Dorsolateral prefrontal cortex (tissue), 120 donors: ENCODE measurements at regions of chr14 and their contacts with region 1.

Region 1: DNA sequence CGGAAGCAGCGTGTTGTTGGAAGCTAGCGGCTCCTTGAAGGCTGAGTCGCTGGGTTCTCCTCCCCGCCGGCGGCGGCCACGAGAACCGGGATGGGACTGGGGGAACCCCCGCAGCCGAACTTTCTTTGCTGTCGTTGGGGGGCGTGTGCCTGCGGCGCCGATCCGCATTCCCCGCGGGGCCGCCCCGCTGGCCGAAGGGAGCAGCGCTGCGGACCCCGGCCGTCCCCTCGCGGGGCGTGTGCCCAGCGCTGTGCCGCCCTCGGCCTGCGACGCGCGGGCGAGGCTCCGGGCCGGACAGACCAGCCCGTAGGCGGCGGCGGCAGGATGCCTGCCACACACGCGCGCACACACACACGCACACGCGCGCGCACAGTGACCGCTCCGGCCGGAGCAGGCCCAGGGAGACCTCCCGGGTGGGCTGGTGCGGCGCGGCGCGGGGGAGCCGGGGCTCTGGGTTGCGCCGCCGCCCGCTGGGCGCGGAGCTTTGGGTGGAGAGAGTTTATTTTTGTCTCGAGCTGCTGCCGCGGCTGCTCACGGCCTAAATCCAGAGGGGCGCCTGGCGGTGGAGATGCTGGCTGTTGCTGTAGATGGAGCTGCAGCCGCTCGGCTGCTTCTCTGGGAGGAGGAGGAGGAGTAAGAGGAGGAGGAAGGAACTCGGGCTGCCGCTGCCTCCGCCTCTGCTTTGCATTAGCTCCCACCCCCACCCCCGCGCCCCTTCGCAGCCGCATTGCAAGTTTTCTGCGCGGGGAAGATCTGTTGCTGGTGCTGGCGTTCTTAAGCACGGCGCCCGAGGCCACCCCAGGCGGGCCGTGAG is at the start of gene SAMD4A:
- DNase-seq: peak; percentile 56 to 81 (median 77)
- H3K4me3 ChIP-seq: peak within 1 kb of the TSS; percentile 54 to 98 (median 82)
- H3K27ac ChIP-seq: peak within 1 kb of the TSS; percentile 65 to 99 (median 94)
- H3K27me3 ChIP-seq: no peaks in the 10 kb centered on the region
- CTCF ChIP-seq: peak in 44 of 56 donors; percentile 9 to 53 (median 35)
- total RNA-seq, gene SAMD4A: 28.4 to 174 (median 49.6) TPM

Region 2: GRCh38 chr14:54488646-54489317 is 77.8 kb before region 1 on chr14 and contains the start of gene GMFB:
- intact Hi-C with region 1: no loop called
- DNase-seq: peak; percentile 82 to 90 (median 86)
- H3K4me3 ChIP-seq: peak within 1 kb of the TSS; percentile 62 to 100 (median 95)
- H3K27ac ChIP-seq: peak within 1 kb of the TSS; percentile 24 to 98 (median 93)
- H3K27me3 ChIP-seq: no peaks in the 10 kb centered on the region
- CTCF ChIP-seq: peak in 55 of 56 donors; percentile 35 to 85 (median 66)
- total RNA-seq, gene GMFB: 78.7 to 157 (median 110) TPM

Region 3: DNA sequence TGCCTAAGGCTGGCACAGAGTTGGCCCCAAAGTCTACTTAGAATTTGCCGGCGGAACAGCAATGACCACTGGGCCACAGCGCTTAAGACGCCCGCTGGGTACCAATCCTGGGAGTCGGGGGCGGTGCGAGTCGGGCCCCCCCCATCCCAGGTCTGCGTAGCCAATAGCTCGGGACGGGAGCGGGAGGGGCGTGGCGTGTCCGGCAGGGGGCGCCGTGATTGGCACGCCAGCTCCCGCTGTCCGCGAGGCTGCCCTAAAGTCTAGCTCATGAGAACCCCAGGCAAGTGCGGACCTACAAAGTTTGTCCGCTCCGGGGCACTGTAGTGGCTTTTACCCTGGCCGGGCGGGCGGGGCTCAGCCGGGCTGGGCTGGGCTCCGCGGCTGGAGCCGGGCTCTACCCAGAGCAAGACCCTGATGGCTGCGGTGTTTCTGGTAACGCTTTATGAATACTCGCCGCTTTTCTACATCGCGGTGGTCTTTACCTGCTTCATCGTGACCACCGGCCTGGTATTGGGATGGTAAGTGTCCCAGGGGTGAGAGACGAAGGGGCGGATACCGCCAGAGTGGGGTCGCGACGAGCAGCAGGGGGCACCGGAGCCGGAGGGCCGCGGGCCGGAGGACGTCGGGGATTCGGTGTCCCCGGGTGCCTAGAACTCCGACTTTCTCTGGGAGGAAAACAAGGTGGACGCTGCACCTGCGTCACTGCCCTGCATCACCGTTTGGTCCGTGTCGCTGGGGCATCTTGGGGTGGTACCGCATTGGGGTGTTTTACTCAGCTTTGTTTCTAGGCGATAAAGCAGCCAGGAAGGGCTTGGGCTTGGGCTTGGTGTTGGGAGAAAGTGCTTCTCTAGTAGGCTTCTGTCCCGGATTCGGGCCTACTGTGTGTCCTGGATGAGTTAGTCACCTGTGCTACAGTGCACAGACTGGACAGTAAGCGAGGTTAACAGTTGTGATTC is 56.8 kb before region 1 on chr14 and contains the start of gene CGRRF1:
- intact Hi-C with region 1: loop called (anchors 1 to 10 kb)
- DNase-seq: peak; percentile 98 to 99 (median 99)
- H3K4me3 ChIP-seq: peak within 1 kb of the TSS; percentile 58 to 100 (median 97)
- H3K27ac ChIP-seq: peak within 1 kb of the TSS; percentile 36 to 98 (median 85)
- H3K27me3 ChIP-seq: no peaks in the 10 kb centered on the region
- CTCF ChIP-seq: peak; percentile 80 to 99 (median 95)
- total RNA-seq, gene CGRRF1: 18.9 to 43.4 (median 28.9) TPM

Region 4: GRCh38 chr14:54642801-54643697 is 76.4 kb after region 1 on chr14:
- intact Hi-C with region 1: loop called (anchors 5 to 10 kb)
- DNase-seq: no peak
- H3K4me3 ChIP-seq: no peak overlapping the region
- H3K27ac ChIP-seq: peak overlapping the region in 11 of 59 donors; percentile 3 to 53 (median 33)
- H3K27me3 ChIP-seq: no peaks in the 10 kb centered on the region
- CTCF ChIP-seq: peak in 28 of 56 donors; percentile 3 to 48 (median 26)

Region 5: GRCh38 chr14:54686219-54686870 is 119.7 kb after region 1 on chr14:
- intact Hi-C with region 1: loop called (anchors 1 to 2 kb)
- DNase-seq: peak in 1 of 10 donors; percentile 32
- H3K4me3 ChIP-seq: peak overlapping the region in 1 of 59 donors; percentile 9
- H3K27ac ChIP-seq: peak overlapping the region in 58 of 59 donors; percentile 15 to 94 (median 78)
- H3K27me3 ChIP-seq: no peaks in the 10 kb centered on the region
- CTCF ChIP-seq: no peak

Region 6: DNA sequence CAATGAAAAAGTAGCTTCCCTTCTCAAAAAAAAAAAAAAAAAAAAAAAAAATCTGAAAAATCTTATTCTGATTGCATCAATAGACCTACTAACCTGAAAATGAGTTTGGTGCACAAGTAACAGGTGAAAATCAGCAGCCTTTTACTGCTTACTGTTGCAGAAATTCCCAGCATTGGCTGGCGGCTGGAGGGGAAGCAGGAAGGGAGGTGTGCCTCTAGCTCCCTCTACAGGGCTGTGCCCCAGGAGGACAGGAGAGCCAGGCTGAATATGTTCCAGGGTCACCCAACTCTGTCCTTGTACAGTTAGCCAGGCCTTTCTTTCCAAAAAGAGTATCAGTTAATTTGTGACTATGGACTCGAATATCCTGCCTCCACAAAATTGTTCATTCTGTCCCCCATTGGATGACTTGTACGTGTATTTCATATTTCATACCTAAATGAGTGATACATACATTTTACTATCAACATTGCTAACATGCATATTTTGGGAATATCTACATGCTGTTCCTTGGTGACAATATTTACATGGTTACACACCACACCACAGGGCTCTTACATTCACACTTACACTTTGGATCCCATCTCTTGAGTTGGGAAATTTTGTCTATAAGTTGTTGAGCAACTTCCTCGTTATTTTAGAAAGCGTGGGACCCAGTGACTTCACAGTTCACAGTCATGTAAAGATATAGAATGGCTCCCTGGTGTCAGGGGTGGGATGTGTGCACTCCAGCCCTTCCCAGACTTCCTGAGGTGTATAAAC is 125.1 kb after region 1 on chr14:
- intact Hi-C with region 1: loop called (anchors 1 to 2 kb)
- DNase-seq: peak; percentile 33 to 84 (median 68)
- H3K4me3 ChIP-seq: no peak overlapping the region
- H3K27ac ChIP-seq: peak overlapping the region in 3 of 59 donors; percentile 15 to 33 (median 19)
- H3K27me3 ChIP-seq: no peaks in the 10 kb centered on the region
- CTCF ChIP-seq: peak; percentile 57 to 91 (median 81)

Region 7: DNA sequence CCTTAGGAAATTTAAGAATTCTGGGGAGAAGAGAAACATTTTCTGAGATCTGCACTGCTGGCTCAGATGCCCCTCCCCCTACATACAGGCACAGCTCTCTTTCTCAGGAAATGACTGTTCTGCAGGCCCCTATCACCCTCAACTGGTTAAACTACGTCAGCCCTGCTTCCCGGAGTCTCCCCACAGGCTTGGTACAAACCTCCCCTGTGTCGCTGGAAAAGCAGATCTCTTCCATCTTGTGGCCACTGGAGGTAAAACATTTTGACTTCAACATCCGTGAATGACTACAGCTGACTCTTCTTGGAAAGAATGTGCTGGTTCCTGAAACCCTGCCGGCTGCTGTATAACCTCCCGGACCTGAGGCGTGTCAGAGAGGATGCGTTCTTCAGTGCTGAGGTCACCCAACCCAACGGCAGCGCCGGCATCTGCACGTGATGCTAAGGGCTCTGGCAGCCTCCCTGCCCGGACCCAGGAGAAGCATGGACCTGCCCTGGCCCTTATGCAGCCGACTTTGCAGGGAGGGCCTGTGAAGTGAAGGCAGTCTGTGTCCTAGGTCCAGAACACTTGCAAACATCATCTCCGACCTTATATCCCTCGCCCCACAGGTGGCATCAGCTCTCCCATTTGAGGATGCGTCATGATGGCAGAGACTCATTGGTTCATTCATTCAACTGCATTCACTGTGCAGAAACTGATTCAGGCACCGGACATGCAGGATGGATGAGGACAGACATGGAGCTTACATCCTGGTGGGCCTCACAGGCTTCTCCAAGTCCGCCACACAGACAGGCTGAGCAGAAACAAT is 206.8 kb after region 1 on chr14:
- intact Hi-C with region 1: loop called (anchors 1 to 2 kb)
- DNase-seq: peak in 6 of 10 donors; percentile 56 to 78 (median 66)
- H3K4me3 ChIP-seq: peak overlapping the region in 38 of 59 donors; percentile 2 to 57 (median 28)
- H3K27ac ChIP-seq: peak overlapping the region in 56 of 59 donors; percentile 13 to 86 (median 64)
- H3K27me3 ChIP-seq: no peaks in the 10 kb centered on the region
- CTCF ChIP-seq: peak; percentile 36 to 71 (median 58)

Region 8: GRCh38 chr14:54805521-54806322 is 239.1 kb after region 1 on chr14:
- intact Hi-C with region 1: loop called (anchors 10 kb)
- DNase-seq: peak; percentile 63 to 89 (median 81)
- H3K4me3 ChIP-seq: peak overlapping the region in 47 of 59 donors; percentile 2 to 52 (median 31)
- H3K27ac ChIP-seq: peak overlapping the region in 2 of 59 donors; percentile 8 to 32
- H3K27me3 ChIP-seq: no peaks in the 10 kb centered on the region
- CTCF ChIP-seq: peak; percentile 81 to 98 (median 92)